ENCODE measurements at regions of chr20 and their contacts with region 1.

Region 1: DNA sequence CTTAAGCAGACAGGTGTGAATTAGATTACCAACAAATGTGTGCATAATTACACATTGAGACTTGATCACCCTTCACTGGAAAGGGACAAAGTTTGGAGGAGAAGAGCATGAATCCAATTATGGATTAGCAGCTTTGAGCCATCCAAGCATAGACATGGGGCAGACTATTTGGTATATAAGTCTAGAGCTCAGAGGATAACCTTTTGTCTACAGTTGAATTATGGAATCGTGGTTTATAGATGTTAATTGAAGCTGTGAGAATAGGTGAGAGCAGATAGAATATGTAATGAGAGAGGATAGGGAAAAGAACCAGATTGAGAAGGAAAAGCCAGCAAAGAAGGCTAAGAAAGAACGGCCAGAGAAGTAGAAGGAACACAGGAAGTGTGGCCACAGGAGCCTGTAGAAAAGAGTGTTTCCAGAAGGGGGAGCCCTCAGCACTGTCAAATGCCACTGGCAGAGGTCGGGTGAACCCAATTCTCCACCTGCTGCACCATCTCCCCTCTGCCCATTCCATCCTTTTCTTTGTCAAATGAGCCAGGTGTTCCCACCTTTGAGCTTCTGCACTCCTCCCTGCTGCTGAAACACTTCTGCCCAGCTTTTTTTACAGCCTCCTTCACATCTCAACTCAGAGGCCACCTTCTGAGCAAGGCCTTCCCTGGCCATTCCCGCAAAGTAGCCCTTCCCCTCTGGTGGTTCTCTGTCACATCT is 7.3 kb downstream of the DNTTIP1 start:
- DNase-seq: peak; percentile 51 to 67
- ATAC-seq: peak; percentile 34 to 56
- H3K4me3 ChIP-seq: no peak overlapping the region
- H3K27ac ChIP-seq: peak overlapping the region; percentile 73 to 80 (median 76)
- H3K4me1 ChIP-seq: peaks cover 28 to 32% of the 10 kb centered on the region in 2 donors
- H3K27me3 ChIP-seq: no peaks in the 10 kb centered on the region
- CTCF ChIP-seq: peak; percentile 53 to 70 (median 64)
- POLR2A ChIP-seq: no peak

Region 2: GRCh38 chr20:44733341-44734069 is 1065.6 kb before region 1 on chr20:
- in situ Hi-C with region 1: no loop called
- intact Hi-C with region 1: loop called (anchors 10 kb)
- DNase-seq: peak; percentile 53 to 70
- ATAC-seq: peak; percentile 37 to 45
- H3K4me3 ChIP-seq: no peak overlapping the region
- H3K27ac ChIP-seq: no peak overlapping the region
- H3K4me1 ChIP-seq: peaks cover 30 to 36% of the 10 kb centered on the region in 2 donors
- H3K27me3 ChIP-seq: no peaks in the 10 kb centered on the region
- CTCF ChIP-seq: peak; percentile 94 to 98 (median 96)
- POLR2A ChIP-seq: no peak

Region 3: DNA sequence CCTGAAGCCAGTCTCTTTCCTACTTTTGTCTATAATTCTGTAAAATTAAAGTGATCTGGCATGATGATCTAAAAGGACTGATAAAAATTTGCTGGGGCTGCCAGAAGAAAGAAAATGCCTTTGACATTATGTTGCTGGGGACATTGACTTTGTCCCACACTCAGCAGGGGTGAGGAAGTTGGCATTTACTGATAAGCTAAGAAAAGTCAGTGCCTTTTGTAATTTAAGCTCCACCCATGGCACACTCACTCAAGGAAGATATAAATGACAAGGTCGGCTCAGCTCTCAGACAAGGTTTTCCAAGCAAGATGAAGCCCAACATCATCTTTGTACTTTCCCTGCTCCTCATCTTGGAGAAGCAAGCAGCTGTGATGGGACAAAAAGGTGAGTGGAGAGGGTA is 592.3 kb before region 1 on chr20 and contains the start of gene SEMG1:
- in situ Hi-C with region 1: no loop called
- intact Hi-C with region 1: no loop called
- DNase-seq: no peak
- ATAC-seq: no peak
- H3K4me3 ChIP-seq: no peak within 1 kb of the TSS
- H3K27ac ChIP-seq: no peak within 1 kb of the TSS
- H3K4me1 ChIP-seq: no peaks in the 10 kb centered on the region
- H3K27me3 ChIP-seq: peaks cover 0 to 8% (median 0%) of the 10 kb centered on the region in 3 donors
- CTCF ChIP-seq: no peak
- POLR2A ChIP-seq: no peak
- total RNA-seq, gene SEMG1: not detected

Region 4: DNA sequence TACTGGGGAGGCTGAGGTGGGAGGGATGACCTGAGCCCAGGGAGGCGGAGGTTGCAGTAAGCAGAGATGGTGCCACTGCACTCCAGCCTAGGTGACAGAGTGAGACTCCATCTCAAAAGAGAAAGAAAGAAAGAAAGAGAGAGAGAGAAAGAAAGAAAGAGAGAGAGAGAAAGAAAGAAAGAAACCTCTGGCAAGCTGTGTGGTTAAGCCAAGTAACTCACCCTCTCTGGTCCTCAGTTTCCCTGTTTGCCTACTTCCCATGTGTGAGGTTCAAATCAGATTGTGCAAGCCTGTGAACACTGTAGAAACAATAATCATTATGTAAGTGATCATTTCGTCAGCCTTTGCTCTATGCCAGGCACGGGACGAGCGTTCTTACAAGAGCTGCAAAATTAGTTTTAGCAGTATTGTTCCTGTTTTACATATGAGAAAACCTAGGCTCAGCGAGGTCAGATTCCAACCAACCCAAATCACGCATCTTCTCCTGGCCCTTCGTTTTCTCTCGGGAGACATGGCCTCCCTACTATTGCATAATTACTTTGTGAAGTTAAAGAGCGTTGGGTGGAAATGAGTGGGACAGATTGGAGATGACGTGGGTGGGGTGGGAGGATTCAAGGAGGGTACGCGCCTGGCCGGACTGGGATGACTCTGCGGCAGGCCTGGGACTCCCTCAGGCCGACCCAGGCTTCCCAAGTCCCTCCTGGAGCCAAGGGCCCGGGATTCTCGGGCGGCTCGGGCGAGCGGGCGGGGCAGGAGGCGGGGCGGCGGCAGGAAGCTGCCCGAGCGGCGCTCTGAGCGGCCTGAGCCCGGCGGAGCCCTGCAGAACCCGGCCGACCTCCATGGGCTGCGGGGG is 34.2 kb after region 1 on chr20 and contains the start of gene SNX21:
- in situ Hi-C with region 1: no loop called
- intact Hi-C with region 1: loop called (anchors 2 kb)
- DNase-seq: peak; percentile 70 to 87
- ATAC-seq: peak; percentile 47 to 57
- H3K4me3 ChIP-seq: peak within 1 kb of the TSS; percentile 73 to 80 (median 79)
- H3K27ac ChIP-seq: peak within 1 kb of the TSS; percentile 95 to 97 (median 96)
- H3K4me1 ChIP-seq: peaks cover 46 to 66% of the 10 kb centered on the region in 2 donors
- H3K27me3 ChIP-seq: no peaks in the 10 kb centered on the region
- CTCF ChIP-seq: no peak
- POLR2A ChIP-seq: no peak
- total RNA-seq, gene SNX21: 35.8 to 114 (median 79.0) TPM

Region 5: DNA sequence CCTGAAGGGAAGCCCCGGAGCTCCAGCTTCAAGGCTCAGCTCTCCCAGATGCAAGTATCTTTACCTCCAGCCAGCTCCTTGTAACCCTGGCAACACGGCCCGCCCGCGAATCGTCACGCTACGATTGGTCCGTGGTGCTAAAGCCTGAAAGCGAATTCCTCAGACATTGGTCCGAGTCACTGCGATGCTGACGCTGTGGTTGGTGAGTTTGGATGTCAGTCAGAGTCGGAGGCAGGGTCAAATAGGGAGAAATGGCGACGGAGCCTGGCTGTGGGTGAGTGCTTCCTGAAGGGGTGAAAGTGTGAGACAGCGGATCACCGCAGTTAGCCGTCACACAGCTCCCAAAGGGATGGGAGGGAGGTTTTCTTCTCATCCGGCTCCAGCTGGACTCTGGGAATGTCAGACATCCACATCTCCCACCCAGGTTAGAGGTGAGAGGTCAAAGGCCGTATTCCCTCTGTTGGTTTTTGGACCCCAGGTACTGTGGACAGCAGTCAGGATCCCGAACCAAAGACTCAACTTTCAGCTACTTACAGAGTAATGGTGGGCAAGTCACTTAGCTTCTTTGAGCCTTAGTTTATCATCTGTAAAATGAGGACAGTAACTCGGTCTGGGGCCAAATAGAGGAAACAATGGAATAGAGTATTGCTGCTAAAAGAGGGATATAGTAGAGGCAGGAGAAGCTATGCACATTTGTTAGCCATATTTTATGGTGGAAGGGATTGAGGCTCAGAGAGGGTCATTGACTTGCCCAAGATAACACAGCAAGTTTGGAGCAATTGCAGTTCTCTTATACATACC is 82.1 kb after region 1 on chr20 and contains the start of gene ZSWIM1:
- in situ Hi-C with region 1: loop called in 1 of 4 experiments (anchors 10 kb)
- intact Hi-C with region 1: no loop called
- DNase-seq: peak; percentile 98 to 99
- ATAC-seq: peak; percentile 100
- H3K4me3 ChIP-seq: peak within 1 kb of the TSS; percentile 67 to 70 (median 68)
- H3K27ac ChIP-seq: peak within 1 kb of the TSS; percentile 87 to 95 (median 92)
- H3K4me1 ChIP-seq: peaks cover 9 to 13% of the 10 kb centered on the region in 2 donors
- H3K27me3 ChIP-seq: no peaks in the 10 kb centered on the region
- CTCF ChIP-seq: no peak
- POLR2A ChIP-seq: peak in 1 of 2 donors; percentile 45
- total RNA-seq, gene ZSWIM1: 5.7 to 8.5 (median 6.9) TPM

Region 6: GRCh38 chr20:46400828-46401477 is 601.9 kb after region 1 on chr20:
- in situ Hi-C with region 1: no loop called
- intact Hi-C with region 1: loop called (anchors 5 kb)
- DNase-seq: no peak
- ATAC-seq: no peak
- H3K4me3 ChIP-seq: peak overlapping the region; percentile 11 to 21 (median 16)
- H3K27ac ChIP-seq: peak overlapping the region; percentile 80 to 93 (median 85)
- H3K4me1 ChIP-seq: peaks cover 70 to 73% of the 10 kb centered on the region in 2 donors
- H3K27me3 ChIP-seq: no peaks in the 10 kb centered on the region
- CTCF ChIP-seq: no peak
- POLR2A ChIP-seq: no peak